Right cardiac atrium (tissue), 5 donors: ENCODE measurements at regions of chr6 and their contacts with region 1.

Region 1: DNA sequence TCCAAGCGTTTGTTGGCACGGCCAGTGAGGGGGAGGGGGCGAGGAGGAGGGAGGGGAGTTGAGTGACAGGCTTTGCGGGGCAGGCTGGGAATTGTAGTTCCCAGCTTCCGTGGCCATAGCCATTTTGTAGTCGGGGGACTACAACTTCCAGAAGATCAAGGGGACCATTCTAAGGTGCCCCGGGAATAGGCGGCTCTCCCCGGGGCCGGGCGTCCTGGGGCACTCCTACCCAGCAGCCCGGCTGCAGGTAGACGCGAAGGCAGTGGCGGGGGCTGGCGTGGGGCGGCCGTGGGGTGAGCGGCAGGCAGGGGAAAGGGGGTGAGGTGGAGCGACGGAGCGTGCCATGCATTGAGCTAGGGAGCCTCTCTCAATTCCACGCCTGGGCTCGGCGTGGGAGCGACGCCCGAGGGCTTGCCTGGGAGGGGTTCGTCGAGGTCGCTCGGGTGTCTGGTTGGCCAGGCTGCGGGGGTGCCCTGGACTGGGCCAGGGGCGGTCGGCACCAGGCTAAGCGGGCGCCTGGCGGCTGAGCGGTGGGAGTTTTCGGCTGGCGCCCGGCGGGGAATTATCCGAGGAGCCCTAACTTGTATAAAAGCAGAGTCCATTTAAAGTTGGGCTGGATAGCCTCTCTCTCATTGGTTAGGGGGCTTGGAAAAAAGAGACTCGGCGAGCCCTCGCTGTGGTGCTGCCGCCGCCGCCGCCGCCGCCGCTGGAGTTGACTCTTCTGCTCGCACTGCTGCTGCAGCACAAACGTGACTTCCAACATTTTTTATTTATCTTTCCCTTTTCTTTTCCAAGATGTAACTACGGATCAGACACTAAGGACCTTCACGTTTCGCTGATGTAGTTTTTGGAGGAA is at the start of gene JARID2:
- DNase-seq: peak; percentile 99 to 100 (median 100)
- ATAC-seq: peak; percentile 91 to 92
- H3K4me3 ChIP-seq: peak within 1 kb of the TSS; percentile 89
- H3K27ac ChIP-seq: peak within 1 kb of the TSS; percentile 95
- H3K4me1 ChIP-seq: no peaks in the 10 kb centered on the region
- H3K27me3 ChIP-seq: no peaks in the 10 kb centered on the region
- total RNA-seq, gene JARID2: 6.8 to 10.1 (median 9.4) TPM

Region 2: DNA sequence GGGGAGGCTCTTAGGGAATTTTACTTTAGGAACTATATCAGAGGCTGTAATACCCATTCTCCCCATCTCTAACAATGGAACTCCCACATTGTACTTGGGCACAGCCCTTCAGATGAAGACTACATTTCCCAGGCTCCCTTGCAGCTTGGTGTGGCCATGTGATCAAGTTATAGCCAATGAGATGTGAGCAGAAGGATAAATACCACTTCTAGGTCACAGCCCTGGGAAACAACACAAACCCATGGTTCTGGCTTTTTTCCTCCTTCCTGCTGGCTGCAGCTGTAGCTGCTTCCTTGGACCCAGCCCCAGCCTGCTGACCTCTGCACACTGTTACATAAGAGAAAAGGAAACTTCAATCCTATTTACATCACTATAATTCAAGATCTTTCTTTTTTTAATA is 445.7 kb before region 1 on chr6:
- intact Hi-C with region 1: loop called in 1 of 4 experiments (anchors 5 kb)
- DNase-seq: peak; percentile 55 to 86 (median 80)
- ATAC-seq: peak; percentile 89 to 90
- H3K4me3 ChIP-seq: no peak overlapping the region
- H3K27ac ChIP-seq: no peak overlapping the region
- H3K4me1 ChIP-seq: peaks cover 3% of the 10 kb centered on the region
- H3K27me3 ChIP-seq: no peaks in the 10 kb centered on the region